Activated naive CD4-positive, alpha-beta T cell treated with anti-CD3 and anti-CD28 coated beads for 36 hours (primary cell): ENCODE measurements at regions of chr5 and their contacts with region 1.

Region 1: GRCh38 chr5:81856948-81857928 is 106.3 kb upstream of the SSBP2 start:
- DNase-seq: peak; percentile 37
- H3K4me3 Mint-ChIP-seq: no peak overlapping the region
- H3K27ac Mint-ChIP-seq: no peak overlapping the region
- H3K4me1 Mint-ChIP-seq: peaks cover 25% of the 10 kb centered on the region
- H3K27me3 Mint-ChIP-seq: no peaks in the 10 kb centered on the region

Region 2: GRCh38 chr5:81878333-81878732 is 21.1 kb after region 1 on chr5:
- CTCF ChIA-PET with region 1: interaction called, 10 read pairs
- intact Hi-C with region 1: no loop called
- DNase-seq: no peak
- H3K4me3 Mint-ChIP-seq: no peak overlapping the region
- H3K27ac Mint-ChIP-seq: no peak overlapping the region
- H3K4me1 Mint-ChIP-seq: no peaks in the 10 kb centered on the region
- H3K27me3 Mint-ChIP-seq: no peaks in the 10 kb centered on the region

Region 3: DNA sequence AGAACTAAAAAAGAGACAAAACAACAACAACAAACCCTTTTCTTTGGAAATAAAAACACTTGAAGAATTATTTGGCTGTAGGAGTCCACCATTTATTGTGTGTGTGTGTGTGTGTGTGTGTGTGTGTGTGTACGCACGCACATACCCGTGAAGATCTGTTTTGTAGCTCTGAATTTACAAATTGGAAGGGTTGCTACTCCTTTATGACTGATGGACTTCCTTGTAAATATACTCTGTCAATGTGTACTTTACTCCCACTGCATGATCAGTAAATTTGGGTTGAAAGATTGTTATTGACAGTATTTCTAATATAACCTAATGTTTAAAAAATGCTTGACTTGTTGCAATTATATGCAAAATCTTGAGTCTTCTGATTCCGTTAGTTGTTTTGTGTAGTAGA is 262.7 kb after region 1 on chr5:
- CTCF ChIA-PET with region 1: no interaction called
- intact Hi-C with region 1: no loop called
- DNase-seq: no peak
- H3K4me3 Mint-ChIP-seq: no peak overlapping the region
- H3K27ac Mint-ChIP-seq: no peak overlapping the region
- H3K4me1 Mint-ChIP-seq: no peaks in the 10 kb centered on the region
- H3K27me3 Mint-ChIP-seq: no peaks in the 10 kb centered on the region